ENCODE measurements at regions of chr9 and their contacts with region 1.

Region 1: DNA sequence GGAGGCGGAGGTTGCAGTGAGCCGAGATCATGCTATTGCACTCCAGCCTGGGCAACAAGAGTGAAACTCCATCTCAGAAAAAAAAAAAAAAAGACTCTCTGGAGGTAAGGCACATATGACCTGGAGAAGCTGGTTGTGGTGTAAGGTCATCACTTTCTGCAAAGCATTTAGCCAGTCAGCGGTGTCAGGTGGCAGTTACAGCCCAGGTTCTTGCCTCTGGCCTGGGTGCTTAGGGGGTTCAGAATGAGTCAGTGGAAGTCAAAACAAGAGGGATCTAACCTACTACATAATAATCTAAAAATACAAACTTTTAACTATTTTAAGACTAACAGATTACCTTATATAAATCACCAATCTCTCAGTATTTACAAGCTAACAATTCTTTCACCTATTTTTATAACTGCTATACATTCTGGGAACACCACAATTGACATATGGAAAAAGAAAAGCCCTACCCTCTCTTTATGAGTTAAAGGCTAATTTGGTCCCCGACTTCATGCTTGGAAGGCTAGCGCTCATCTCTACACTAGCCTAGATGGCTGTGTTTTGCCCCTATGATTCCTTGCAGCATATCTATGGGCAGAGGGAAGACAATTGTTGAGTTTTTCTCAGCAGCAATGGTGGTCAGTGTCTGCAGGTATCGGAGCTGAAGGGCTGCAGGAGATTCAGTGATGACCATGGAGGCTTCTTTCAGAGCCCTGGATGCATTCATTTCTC is 29.2 kb downstream of the STOM start:
- DNase-seq: no peak
- ATAC-seq: no peak
- H3K4me3 ChIP-seq: no peak overlapping the region
- H3K27ac ChIP-seq: no peak overlapping the region
- H3K4me1 ChIP-seq: no peaks in the 10 kb centered on the region
- CTCF ChIP-seq: no peak
- EP300 ChIP-seq: no peak
- POLR2A ChIP-seq: no peak
- RAD21 ChIP-seq: no peak

Region 2: DNA sequence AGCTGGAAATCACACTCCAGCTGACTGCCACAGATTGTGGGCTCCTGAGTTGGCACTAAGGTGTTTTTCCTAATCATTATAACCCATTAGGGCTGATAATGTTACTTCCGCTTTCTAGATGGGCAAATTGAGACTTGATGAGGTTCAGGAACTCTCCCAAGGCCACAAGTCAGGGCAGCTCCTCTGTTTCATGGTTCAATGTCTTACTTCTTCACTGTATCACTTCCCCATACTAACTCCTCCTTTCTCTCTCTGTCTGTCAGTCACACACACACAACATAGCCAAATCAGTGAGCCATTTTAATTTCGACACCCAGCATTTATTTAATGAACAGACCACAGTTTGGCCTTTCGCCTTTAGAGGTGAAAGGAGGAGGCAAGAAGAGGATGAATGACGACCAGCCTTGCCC is 396.4 kb before region 1 on chr9:
- CTCF ChIA-PET with region 1: no interaction called
- POLR2A ChIA-PET with region 1: no interaction called
- DNase-seq: no peak
- ATAC-seq: no peak
- H3K4me3 ChIP-seq: no peak overlapping the region
- H3K27ac ChIP-seq: no peak overlapping the region; a peak in 1 of 6 replicates
- H3K4me1 ChIP-seq: peaks cover 46% of the 10 kb centered on the region
- CTCF ChIP-seq: no peak
- EP300 ChIP-seq: no peak
- POLR2A ChIP-seq: no peak
- RAD21 ChIP-seq: no peak

Region 3: DNA sequence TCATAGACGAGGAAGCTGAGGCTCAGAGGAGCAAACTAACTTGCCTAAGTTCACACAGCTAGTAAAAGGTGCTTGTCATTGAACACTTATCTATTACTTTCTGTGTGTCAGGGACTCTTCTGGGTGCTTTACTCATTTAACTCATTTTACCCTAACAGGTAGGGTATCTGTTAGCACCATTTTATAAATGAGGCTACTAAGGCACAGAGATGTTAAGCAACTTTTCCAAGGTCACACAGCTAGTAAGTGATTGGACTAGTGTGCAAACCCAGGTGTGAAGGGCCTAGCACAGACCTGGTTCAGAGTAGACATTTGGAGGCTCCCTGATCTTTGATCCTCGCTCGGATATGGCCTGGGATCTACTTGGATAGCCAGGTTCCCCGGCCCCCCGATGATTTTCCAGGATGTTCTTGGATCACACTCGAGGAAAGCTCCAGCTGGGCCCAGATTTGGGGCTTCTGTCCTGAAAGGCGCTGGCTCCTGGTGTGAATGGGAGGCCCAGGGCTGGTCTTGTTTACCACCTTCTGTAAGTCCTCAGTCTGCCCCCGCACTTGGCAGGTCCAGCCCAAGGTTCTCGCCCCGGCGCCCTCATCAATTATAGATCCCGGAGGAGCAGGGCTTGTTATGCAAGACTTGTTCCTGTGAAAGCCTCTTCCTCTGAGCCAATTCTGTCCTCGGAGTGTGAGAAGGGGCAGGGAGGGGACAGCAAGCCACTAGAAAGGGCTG is 35.4 kb before region 1 on chr9:
- CTCF ChIA-PET with region 1: no interaction called
- POLR2A ChIA-PET with region 1: no interaction called
- DNase-seq: no peak
- ATAC-seq: no peak
- H3K4me3 ChIP-seq: no peak overlapping the region
- H3K27ac ChIP-seq: peak overlapping the region in 1 of 2 experiments; percentile 30; a peak in 2 of 6 replicates
- H3K4me1 ChIP-seq: peaks cover 20% of the 10 kb centered on the region
- CTCF ChIP-seq: no peak
- EP300 ChIP-seq: no peak
- POLR2A ChIP-seq: no peak
- RAD21 ChIP-seq: no peak

Region 4: GRCh38 chr9:121350993-121351561 is 10.2 kb after region 1 on chr9:
- CTCF ChIA-PET with region 1: interaction called, 11 read pairs
- POLR2A ChIA-PET with region 1: interaction called, 4 read pairs
- DNase-seq: peak in 1 of 2 experiments; percentile 60
- ATAC-seq: peak; percentile 41 to 65; a peak in 3 of 6 replicates
- H3K4me3 ChIP-seq: no peak overlapping the region
- H3K27ac ChIP-seq: peak overlapping the region; percentile 12 to 55; a peak in 3 of 6 replicates
- H3K4me1 ChIP-seq: peaks cover 22% of the 10 kb centered on the region
- CTCF ChIP-seq: no peak
- EP300 ChIP-seq: no peak
- POLR2A ChIP-seq: no peak
- RAD21 ChIP-seq: no peak

Measured in A549 (cell line).